AG04449 (cell line): ENCODE measurements at regions of chr3 and their contacts with region 1.

Region 1: GRCh38 chr3:187319699-187320302 is 28.3 kb upstream of the MASP1 start:
- DNase-seq: no peak
- H3K4me3 ChIP-seq: no peak overlapping the region
- CTCF ChIP-seq: peak; percentile 86

Region 2: DNA sequence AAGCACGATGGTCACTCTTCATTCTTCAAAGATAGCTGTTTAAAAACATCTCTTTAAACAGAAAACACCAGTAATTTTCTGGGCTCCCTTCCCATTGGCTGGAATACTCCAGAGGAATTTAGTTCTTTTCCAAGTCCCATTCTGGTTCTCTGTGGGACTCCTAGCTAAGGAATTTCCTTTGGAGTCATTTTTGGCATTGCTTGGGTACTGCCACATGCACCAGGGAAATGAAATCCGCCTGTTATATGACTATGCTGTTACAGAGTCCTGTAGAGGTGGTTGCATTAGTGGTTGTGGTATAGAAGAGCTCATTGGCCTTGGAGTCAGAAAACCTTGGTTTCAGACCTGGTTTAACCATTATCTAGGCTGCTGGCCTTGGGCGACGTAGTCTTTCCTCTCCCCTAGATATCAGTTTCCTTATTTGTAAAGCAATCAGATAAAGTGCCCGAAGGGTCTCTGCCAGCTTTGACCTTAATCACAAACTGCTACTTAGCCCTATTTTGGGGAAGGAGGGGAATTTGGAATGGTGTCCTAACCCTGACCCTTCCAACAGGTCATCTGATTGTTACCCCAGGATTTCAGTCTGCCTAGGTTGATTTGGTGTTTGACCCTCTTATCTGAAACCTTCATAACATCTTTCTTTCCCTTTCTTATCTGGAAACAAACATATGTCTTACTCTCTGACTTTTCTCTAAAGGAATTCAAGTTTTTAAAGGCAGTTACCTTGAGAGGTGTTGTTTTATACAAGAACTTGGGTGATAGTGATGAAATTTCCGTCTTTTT is 109.1 kb before region 1 on chr3:
- CTCF ChIA-PET with region 1: interaction called, 442 read pairs
- POLR2A ChIA-PET with region 1: no interaction called
- DNase-seq: peak; percentile 45
- H3K4me3 ChIP-seq: no peak overlapping the region
- CTCF ChIP-seq: no peak

Region 3: GRCh38 chr3:187305881-187306280 is 13.9 kb before region 1 on chr3:
- CTCF ChIA-PET with region 1: interaction called, 99 read pairs
- POLR2A ChIA-PET with region 1: no interaction called
- DNase-seq: no peak
- H3K4me3 ChIP-seq: no peak overlapping the region
- CTCF ChIP-seq: no peak

Region 4: DNA sequence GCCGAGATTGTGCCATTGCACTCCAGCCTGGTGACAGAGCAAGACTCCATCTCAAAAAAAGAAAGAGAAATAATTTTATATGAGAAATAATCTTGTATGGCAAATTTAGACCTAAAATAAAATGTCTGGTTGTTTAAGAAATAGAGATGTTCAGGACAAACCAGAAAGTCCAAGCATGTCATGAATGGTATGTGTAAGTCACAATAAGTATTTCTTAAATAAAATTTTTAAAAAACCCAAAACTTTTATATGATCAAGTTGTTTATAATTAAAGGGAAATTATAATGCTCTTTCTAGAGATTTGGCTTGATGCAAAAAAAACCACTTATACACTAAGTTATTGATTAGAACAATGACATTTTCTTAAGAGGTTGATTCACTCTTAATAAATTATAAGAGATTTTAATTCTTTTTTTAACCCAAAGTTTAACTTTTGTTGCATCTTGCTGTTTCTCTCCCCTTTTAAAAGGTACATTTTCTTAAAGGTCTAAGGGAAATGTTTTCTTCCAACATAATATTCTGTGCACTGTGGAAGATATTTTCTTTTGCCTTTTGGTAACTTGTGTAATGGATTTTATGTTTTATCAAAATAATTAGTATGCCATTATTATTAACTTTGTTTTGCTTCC is 154.1 kb after region 1 on chr3:
- CTCF ChIA-PET with region 1: no interaction called
- POLR2A ChIA-PET with region 1: no interaction called
- DNase-seq: no peak
- H3K4me3 ChIP-seq: no peak overlapping the region
- CTCF ChIP-seq: no peak

Region 5: GRCh38 chr3:187590861-187591576 is 271.2 kb after region 1 on chr3:
- CTCF ChIA-PET with region 1: interaction called, 10 read pairs
- POLR2A ChIA-PET with region 1: no interaction called
- DNase-seq: no peak
- H3K4me3 ChIP-seq: no peak overlapping the region
- CTCF ChIP-seq: no peak

Region 6: GRCh38 chr3:187651282-187651681 is 331.5 kb after region 1 on chr3:
- CTCF ChIA-PET with region 1: interaction called, 10 read pairs
- POLR2A ChIA-PET with region 1: no interaction called
- DNase-seq: no peak
- H3K4me3 ChIP-seq: no peak overlapping the region
- CTCF ChIP-seq: no peak

Region 7: GRCh38 chr3:187706971-187707370 is 387.2 kb after region 1 on chr3:
- CTCF ChIA-PET with region 1: interaction called, 190 read pairs
- POLR2A ChIA-PET with region 1: no interaction called
- DNase-seq: no peak
- H3K4me3 ChIP-seq: no peak overlapping the region
- CTCF ChIP-seq: no peak